GM12878 (cell line): ENCODE measurements at regions of chr2 and their contacts with region 1.

Region 1: GRCh38 chr2:233854241-233854981 is at the start of gene HJURP:
- DNase-seq: peak; percentile 90
- ATAC-seq: peak; percentile 98
- H3K4me3 ChIP-seq: peak within 1 kb of the TSS; percentile 88
- H3K27ac ChIP-seq: peak within 1 kb of the TSS; percentile 92
- H3K4me1 ChIP-seq: peaks cover 7% of the 10 kb centered on the region; the same call in 1 of the 2 replicates
- H3K27me3 ChIP-seq: no peaks in the 10 kb centered on the region
- CTCF ChIP-seq: no peak
- EP300 ChIP-seq: no peak
- POLR2A ChIP-seq: peak; percentile 96
- RAD21 ChIP-seq: no peak
- polyA plus RNA-seq, gene HJURP: 12.7 to 12.9 TPM

Region 2: DNA sequence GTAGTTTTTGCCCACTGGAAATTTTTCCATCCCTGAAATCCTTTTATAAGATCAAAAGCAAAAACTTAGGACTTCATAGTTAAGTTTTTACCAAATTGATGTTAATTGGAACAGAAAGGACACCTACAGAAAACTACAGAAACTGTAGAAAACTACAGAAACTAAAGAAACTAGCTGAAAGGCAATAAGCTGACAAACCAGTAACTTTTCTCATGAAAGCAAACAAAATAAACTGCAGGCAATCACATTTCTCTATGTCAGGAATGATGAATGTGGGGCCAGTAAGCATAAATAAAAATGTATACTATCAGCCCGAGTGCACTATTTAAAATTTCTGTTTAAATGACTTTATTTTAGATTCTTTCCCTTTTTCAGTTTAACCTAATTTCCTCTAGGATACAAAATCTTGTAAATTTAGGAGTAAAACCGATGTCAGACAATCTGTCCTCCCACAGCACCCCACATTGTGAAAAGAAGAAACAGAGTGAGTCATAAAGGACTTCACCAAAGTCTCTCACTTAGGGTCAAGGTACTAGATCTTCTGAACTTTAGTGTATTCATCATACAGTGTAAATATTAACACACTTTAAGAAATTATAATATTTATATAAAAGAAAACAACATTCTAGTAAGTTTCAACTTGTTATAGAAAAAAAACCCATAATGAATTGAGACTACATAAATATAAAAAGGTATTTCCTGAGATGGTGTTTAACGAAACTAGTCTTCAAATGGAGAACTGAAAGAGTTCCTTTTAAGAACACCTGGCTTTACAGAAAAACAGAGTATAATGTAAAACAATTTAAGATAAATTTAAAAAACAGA is 334.4 kb before region 1 on chr2:
- CTCF ChIA-PET with region 1: no interaction called
- POLR2A ChIA-PET with region 1: no interaction called
- RAD21 ChIA-PET with region 1: no interaction called
- SMC1A ChIA-PET with region 1: no interaction called
- in situ Hi-C with region 1: no loop called
- intact Hi-C with region 1: no loop called
- DNase-seq: no peak
- ATAC-seq: peak; percentile 99
- H3K4me3 ChIP-seq: no peak overlapping the region
- H3K27ac ChIP-seq: peak overlapping the region; percentile 83
- H3K4me1 ChIP-seq: peaks cover 24% of the 10 kb centered on the region
- H3K27me3 ChIP-seq: no peaks in the 10 kb centered on the region
- CTCF ChIP-seq: no peak
- EP300 ChIP-seq: peak; percentile 21 to 48; a peak in 3 of 4 replicates
- POLR2A ChIP-seq: no peak
- RAD21 ChIP-seq: no peak

Region 3: GRCh38 chr2:233844064-233844807 is 10.2 kb before region 1 on chr2:
- CTCF ChIA-PET with region 1: interaction called, 11 read pairs
- POLR2A ChIA-PET with region 1: no interaction called
- RAD21 ChIA-PET with region 1: no interaction called
- SMC1A ChIA-PET with region 1: interaction called, 4 read pairs
- in situ Hi-C with region 1: no loop called
- intact Hi-C with region 1: no loop called
- DNase-seq: no peak
- ATAC-seq: no peak
- H3K4me3 ChIP-seq: no peak overlapping the region
- H3K27ac ChIP-seq: no peak overlapping the region
- H3K4me1 ChIP-seq: peaks cover 5% of the 10 kb centered on the region
- H3K27me3 ChIP-seq: no peaks in the 10 kb centered on the region
- CTCF ChIP-seq: no peak
- EP300 ChIP-seq: no peak
- POLR2A ChIP-seq: no peak
- RAD21 ChIP-seq: no peak

Region 4: DNA sequence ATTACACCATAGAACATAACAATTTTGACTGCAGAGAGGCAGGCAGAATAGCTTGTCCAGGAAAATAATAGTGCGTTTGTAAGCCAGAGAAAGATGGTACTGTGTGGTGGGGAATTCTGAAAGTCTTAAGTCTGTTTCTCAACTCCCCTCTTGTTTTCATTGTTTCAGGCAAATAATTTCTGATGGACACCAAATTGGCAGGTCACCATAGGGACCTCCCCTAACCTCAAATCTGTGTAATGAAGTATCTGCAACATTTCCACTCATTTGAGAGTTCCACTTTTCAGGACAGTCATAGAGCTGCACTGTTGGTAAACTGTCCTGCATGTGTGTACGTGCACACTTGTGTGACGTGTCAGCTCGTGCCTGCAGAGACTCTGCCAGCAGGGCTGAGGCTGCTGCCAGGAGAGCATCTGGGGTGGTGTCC is 1835.0 kb after region 1 on chr2:
- CTCF ChIA-PET with region 1: no interaction called
- POLR2A ChIA-PET with region 1: no interaction called
- RAD21 ChIA-PET with region 1: no interaction called
- SMC1A ChIA-PET with region 1: no interaction called
- in situ Hi-C with region 1: no loop called
- intact Hi-C with region 1: no loop called
- DNase-seq: no peak
- ATAC-seq: no peak
- H3K4me3 ChIP-seq: no peak overlapping the region
- H3K27ac ChIP-seq: no peak overlapping the region
- H3K4me1 ChIP-seq: no peaks in the 10 kb centered on the region
- H3K27me3 ChIP-seq: no peaks in the 10 kb centered on the region
- CTCF ChIP-seq: no peak
- EP300 ChIP-seq: no peak
- POLR2A ChIP-seq: no peak
- RAD21 ChIP-seq: no peak